Endothelial cell of umbilical vein (primary cell): ENCODE measurements at regions of chr6 and their contacts with region 1.

Region 1: GRCh38 chr6:28136585-28137504 is 4.8 kb upstream of the ZKSCAN8 start:
- DNase-seq: peak; percentile 90
- H3K4me3 ChIP-seq: peak overlapping the region; percentile 54 to 95 (median 90)
- H3K27ac ChIP-seq: peak overlapping the region; percentile 93
- H3K4me1 ChIP-seq: peaks cover 25% of the 10 kb centered on the region
- H3K27me3 ChIP-seq: no peaks in the 10 kb centered on the region
- CTCF ChIP-seq: no peak
- POLR2A ChIP-seq: peak; percentile 65

Region 2: DNA sequence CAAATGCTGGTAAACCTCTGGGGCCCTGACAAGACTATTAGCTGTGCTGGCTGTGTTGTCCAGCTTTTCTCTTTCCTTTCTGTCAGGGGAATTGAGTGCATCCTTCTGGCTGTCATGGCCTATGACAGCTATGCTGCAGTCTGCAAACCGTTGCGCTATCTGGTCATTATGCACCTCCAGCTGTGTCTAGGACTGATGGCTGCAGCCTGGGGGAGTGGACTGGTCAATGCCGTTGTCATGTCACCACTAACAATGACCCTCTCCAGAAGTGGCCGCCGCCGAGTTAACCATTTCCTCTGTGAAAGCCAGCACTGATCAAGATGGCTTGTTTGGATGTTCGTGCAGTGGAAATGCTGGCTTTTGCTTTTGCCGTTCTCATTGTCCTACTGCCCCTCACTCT is 159.5 kb before region 1 on chr6:
- CTCF ChIA-PET with region 1: no interaction called
- POLR2A ChIA-PET with region 1: no interaction called
- dilution Hi-C with region 1: no loop called
- intact Hi-C with region 1: no loop called
- DNase-seq: no peak
- H3K4me3 ChIP-seq: no peak overlapping the region
- H3K27ac ChIP-seq: no peak overlapping the region
- H3K4me1 ChIP-seq: no peaks in the 10 kb centered on the region
- H3K27me3 ChIP-seq: no peaks in the 10 kb centered on the region
- CTCF ChIP-seq: no peak
- POLR2A ChIP-seq: no peak

Region 3: GRCh38 chr6:28080631-28081485 is 56.0 kb before region 1 on chr6:
- CTCF ChIA-PET with region 1: no interaction called
- POLR2A ChIA-PET with region 1: interaction called, 3 read pairs
- dilution Hi-C with region 1: no loop called
- intact Hi-C with region 1: loop called (anchors 1 kb)
- DNase-seq: peak; percentile 97
- H3K4me3 ChIP-seq: peak overlapping the region; percentile 1 to 73 (median 64)
- H3K27ac ChIP-seq: peak overlapping the region; percentile 87
- H3K4me1 ChIP-seq: peaks cover 9% of the 10 kb centered on the region
- H3K27me3 ChIP-seq: no peaks in the 10 kb centered on the region
- CTCF ChIP-seq: no peak
- POLR2A ChIP-seq: peak; percentile 36

Region 4: DNA sequence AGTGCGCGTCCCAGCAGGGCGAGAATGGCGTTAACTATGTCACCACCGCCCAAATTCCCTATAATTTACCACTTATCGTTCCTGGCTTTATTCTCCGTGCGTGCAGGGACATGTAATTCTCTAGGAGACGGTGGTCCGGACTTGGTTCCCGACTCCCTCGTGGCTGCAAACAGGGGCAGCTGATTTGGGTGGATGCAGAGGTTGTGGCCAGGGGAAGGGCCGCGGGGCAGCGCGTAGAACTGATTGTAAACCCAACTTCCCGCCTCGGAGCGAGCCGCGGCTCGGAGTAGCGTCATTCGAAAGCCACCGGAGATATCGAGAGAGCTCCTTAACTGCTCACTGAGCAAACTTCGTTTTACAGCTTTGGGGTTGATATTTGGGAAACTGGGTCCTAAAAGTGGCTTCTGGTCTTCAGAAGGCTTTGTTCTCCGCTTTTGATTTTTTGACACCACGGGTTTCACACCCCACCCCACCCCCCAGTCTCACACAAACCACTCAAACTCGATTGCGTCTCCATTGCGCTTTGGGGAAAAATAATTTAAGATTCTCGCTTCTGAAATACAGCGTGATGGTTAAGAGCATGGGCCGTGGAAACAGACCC is 70.8 kb after region 1 on chr6:
- CTCF ChIA-PET with region 1: interaction called, 4 read pairs
- POLR2A ChIA-PET with region 1: interaction called, 4 read pairs
- dilution Hi-C with region 1: no loop called
- intact Hi-C with region 1: loop called (anchors 1 kb)
- DNase-seq: peak; percentile 49
- H3K4me3 ChIP-seq: peak overlapping the region; percentile 33 to 49 (median 33)
- H3K27ac ChIP-seq: no peak overlapping the region
- H3K4me1 ChIP-seq: peaks cover 21% of the 10 kb centered on the region
- H3K27me3 ChIP-seq: peaks cover 39 to 81% of the 10 kb centered on the region in 2 experiments
- CTCF ChIP-seq: no peak
- POLR2A ChIP-seq: no peak

Region 5: DNA sequence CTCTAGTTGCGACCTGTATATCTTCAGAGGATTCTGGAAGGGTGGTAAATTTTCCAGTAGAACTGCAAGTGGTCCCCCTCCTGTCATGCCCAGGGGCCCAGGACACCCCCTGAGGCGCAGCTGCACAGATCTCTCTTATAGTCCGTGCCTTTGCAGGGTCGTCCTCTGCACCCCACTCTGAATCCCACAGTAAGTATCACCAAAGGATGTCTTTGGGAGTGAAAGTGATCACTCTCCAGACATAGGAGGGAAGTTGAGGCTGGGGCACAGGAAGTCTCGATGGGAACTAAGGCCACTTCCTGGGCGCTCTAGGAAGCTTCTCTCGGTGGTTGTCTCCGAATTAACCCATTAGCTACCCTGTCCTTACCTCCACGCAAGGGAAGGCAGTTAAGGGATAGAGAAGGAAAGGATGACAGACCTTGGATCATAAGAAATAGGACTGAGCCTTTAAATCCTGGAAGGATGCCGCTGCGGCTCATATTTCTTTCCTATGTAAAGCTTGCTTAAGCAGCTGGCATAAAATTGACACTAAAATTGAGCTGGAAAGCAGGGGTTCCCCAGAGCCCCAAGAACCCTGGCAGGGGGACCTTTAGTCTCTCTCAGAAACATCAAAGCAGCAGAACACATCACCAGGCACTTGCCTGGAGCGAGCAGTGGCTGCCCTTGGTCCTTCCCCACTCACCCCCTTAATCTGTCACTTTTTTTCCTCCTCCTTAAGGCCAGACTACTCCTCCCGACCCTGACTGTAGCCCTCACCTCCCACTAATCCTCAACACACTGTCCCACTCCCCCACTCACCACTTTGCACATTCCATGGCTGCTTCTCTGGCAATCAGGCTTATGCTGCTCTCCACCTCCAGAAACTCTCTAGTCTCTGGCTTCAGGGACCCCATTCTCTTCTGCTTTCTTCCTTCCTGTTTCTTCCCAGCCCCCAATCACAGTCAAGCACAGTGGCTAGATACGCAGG is 115.4 kb after region 1 on chr6 and contains the start of gene ZKSCAN4:
- CTCF ChIA-PET with region 1: no interaction called
- POLR2A ChIA-PET with region 1: interaction called, 7 read pairs
- dilution Hi-C with region 1: no loop called
- intact Hi-C with region 1: loop called (anchors 1 kb)
- DNase-seq: peak; percentile 83
- H3K4me3 ChIP-seq: peak within 1 kb of the TSS; percentile 85 to 89 (median 85)
- H3K27ac ChIP-seq: no peak within 1 kb of the TSS
- H3K4me1 ChIP-seq: peaks cover 12% of the 10 kb centered on the region
- H3K27me3 ChIP-seq: no peaks in the 10 kb centered on the region
- CTCF ChIP-seq: no peak
- POLR2A ChIP-seq: no peak
- total RNA-seq, gene ZKSCAN4: 3.6 and 4.1 TPM in 2 replicates

Region 6: DNA sequence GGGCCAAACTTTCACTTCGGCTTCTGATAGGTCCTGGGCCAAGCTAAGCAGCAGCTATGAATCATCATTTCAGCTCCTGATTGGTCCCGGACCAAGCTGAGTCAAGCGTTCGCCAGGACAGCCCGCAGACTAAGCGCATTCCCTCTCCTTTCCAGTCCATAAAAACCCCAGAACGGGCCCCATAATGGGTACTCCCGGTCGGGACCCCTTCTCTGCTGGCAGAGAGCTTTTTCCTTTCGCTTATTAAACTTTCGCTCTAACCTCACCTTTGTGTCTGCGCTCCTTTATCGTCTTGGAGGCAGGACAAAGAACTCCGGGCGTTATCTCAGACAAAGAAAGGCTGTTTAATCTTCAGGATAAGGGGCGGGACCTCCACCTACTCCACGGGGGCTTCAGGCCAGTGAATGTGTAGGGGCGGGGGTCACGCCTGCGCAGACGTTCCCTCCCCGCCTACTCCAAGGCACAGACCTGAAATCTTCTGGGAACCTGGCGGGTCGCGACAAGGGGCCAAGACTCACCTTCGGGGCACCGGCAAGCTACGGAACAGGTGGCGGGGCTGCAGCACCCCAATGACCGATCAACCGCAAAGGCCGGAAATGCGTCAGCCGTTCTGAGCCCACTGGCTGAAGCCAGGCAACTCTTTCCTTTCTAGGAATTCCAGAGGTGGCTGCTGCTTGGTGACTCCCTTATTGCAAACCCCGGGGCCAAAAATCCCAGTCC is 198.9 kb after region 1 on chr6 and contains the start of gene ZSCAN31:
- CTCF ChIA-PET with region 1: no interaction called
- POLR2A ChIA-PET with region 1: interaction called, 6 read pairs
- dilution Hi-C with region 1: no loop called
- intact Hi-C with region 1: loop called (anchors 1 kb)
- DNase-seq: peak; percentile 98
- H3K4me3 ChIP-seq: peak within 1 kb of the TSS; percentile 70 to 79 (median 73)
- H3K27ac ChIP-seq: peak within 1 kb of the TSS; percentile 96
- H3K4me1 ChIP-seq: peaks cover 15% of the 10 kb centered on the region
- H3K27me3 ChIP-seq: no peaks in the 10 kb centered on the region
- CTCF ChIP-seq: no peak
- POLR2A ChIP-seq: peak; percentile 94
- total RNA-seq, gene ZSCAN31: 19.5 and 23.0 TPM in 2 replicates

Region 7: DNA sequence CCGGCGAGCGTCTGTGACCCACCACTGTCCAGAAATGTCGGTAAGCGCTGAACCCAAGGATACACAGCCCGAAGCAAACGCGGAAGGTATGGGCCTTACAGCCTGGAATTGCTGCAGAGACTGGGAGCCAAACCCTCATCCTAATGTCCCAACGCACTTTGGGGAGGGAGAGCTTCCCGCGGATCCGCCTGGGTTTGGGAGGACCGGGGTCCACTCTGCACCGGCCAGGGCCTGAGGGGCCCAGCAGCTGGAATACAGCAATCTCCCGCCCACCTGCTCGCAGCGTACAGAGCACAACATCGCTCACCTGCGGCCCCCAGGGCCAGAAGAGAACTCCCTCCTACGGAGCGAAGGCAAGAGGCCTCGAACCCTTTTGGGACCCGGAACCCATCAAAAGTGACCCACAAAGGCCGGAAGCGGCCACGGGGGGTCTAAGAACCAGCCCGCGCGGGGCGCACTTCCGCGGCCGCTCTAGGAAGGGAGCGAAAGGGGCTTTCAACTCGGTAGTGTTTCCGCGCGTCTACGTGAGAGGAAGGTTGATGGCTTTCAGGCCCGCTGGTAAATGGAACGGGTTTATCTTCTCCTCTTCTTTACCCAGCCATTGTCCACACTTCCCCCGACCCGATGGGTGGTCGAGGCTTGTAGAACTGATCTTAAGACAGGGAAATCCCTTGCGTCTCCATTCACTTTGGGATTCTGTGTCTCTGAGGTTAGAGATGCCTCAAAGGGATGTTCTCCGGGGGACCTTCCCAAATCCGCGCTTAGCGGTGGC is 262.7 kb after region 1 on chr6 and contains the start of gene ZSCAN12:
- CTCF ChIA-PET with region 1: no interaction called
- POLR2A ChIA-PET with region 1: no interaction called
- dilution Hi-C with region 1: no loop called
- intact Hi-C with region 1: loop called (anchors 2 kb)
- DNase-seq: peak; percentile 72
- H3K4me3 ChIP-seq: peak within 1 kb of the TSS; percentile 58 to 95 (median 94)
- H3K27ac ChIP-seq: peak within 1 kb of the TSS; percentile 60
- H3K4me1 ChIP-seq: peaks cover 16% of the 10 kb centered on the region
- H3K27me3 ChIP-seq: peaks cover 9 to 18% of the 10 kb centered on the region in 2 experiments
- CTCF ChIP-seq: peak; percentile 39 to 71
- POLR2A ChIP-seq: peak; percentile 80
- total RNA-seq, gene ZSCAN12: 4.2 and 4.4 TPM in 2 replicates

Region 8: GRCh38 chr6:28683944-28684538 is 547.2 kb after region 1 on chr6:
- CTCF ChIA-PET with region 1: no interaction called
- POLR2A ChIA-PET with region 1: no interaction called
- dilution Hi-C with region 1: no loop called
- intact Hi-C with region 1: loop called (anchors 5 kb)
- DNase-seq: peak; percentile 55
- H3K4me3 ChIP-seq: no peak overlapping the region
- H3K27ac ChIP-seq: no peak overlapping the region
- H3K4me1 ChIP-seq: peaks cover 7% of the 10 kb centered on the region
- H3K27me3 ChIP-seq: peaks cover 20 to 25% of the 10 kb centered on the region in 2 experiments
- CTCF ChIP-seq: peak; percentile 43 to 48
- POLR2A ChIP-seq: no peak